ENCODE measurements at regions of chr1 and their contacts with region 1.

Region 1: GRCh38 chr1:50774759-50775351 is 185.2 kb downstream of the FAF1 start:
- DNase-seq: no peak
- H3K4me3 ChIP-seq: no peak overlapping the region
- H3K27me3 ChIP-seq: no peaks in the 10 kb centered on the region
- CTCF ChIP-seq: peak; percentile 71

Region 2: DNA sequence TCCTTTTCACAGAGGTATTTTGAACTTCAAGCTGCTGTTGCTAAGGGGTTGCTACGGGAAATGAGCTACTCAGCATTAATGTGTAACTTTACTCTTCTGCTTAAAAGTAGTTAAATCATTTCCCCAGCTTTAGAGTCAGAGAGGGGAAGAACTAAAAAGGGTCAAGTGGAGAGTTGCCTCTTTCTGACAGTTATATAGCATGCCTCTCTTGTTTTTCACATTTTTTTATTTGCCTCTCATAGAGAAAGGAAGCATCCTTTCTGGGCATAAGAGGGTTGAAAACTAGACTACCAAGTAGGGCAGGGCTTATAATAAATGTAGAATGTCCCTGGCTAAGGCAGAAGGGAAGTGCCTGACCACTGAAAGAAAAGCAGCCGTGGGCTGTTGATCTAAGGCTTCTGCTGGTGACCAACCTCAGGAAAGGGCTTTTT is 676.2 kb before region 1 on chr1:
- CTCF ChIA-PET with region 1: no interaction called
- POLR2A ChIA-PET with region 1: no interaction called
- DNase-seq: no peak
- H3K4me3 ChIP-seq: no peak overlapping the region
- H3K27me3 ChIP-seq: no peaks in the 10 kb centered on the region
- CTCF ChIP-seq: no peak

Region 3: GRCh38 chr1:50651476-50652263 is 123.2 kb before region 1 on chr1:
- CTCF ChIA-PET with region 1: no interaction called
- POLR2A ChIA-PET with region 1: no interaction called
- DNase-seq: no peak
- H3K4me3 ChIP-seq: no peak overlapping the region
- H3K27me3 ChIP-seq: no peaks in the 10 kb centered on the region
- CTCF ChIP-seq: no peak

Region 4: DNA sequence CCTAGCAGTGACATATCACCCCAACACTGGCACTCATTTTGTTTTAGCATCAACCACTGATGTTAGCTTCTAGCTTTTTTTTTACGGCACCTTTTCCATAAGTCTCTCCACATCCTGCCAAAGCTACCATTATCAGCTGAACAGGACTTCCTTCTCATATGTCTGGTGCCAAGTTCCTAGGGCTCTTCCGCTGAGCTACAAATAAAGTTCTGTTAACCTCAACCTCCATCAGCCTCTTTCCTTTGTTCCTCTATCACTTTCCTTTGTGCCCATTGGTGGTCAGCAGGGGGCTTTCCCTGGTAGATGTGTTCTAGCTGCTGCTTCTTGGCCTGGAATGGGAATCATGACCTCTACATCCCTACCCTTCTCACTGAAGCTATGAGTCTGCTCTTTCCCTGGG is 21.4 kb after region 1 on chr1:
- CTCF ChIA-PET with region 1: interaction called, 11 read pairs
- POLR2A ChIA-PET with region 1: no interaction called
- DNase-seq: no peak
- H3K4me3 ChIP-seq: no peak overlapping the region
- H3K27me3 ChIP-seq: no peaks in the 10 kb centered on the region
- CTCF ChIP-seq: no peak

Region 5: GRCh38 chr1:50929376-50929958 is 154.6 kb after region 1 on chr1:
- CTCF ChIA-PET with region 1: interaction called, 12 read pairs
- POLR2A ChIA-PET with region 1: no interaction called
- DNase-seq: no peak
- H3K4me3 ChIP-seq: no peak overlapping the region
- H3K27me3 ChIP-seq: no peaks in the 10 kb centered on the region
- CTCF ChIP-seq: peak; percentile 45

Region 6: GRCh38 chr1:51058858-51059257 is 284.0 kb after region 1 on chr1:
- CTCF ChIA-PET with region 1: interaction called, 11 read pairs
- POLR2A ChIA-PET with region 1: no interaction called
- DNase-seq: no peak
- H3K4me3 ChIP-seq: no peak overlapping the region
- H3K27me3 ChIP-seq: no peaks in the 10 kb centered on the region
- CTCF ChIP-seq: peak; percentile 64

Measured in BJ (cell line).